ENCODE measurements at regions of chr3 and their contacts with region 1.

Region 1: GRCh38 chr3:50327943-50328691 is at the start of gene TUSC2:
- DNase-seq: peak; percentile 95

Region 2: GRCh38 chr3:50292159-50293078 is 35.7 kb before region 1 on chr3 and contains the start of gene IFRD2:
- CTCF ChIA-PET with region 1: no interaction called
- POLR2A ChIA-PET with region 1: interaction called, 21 read pairs
- DNase-seq: peak; percentile 93

Region 3: DNA sequence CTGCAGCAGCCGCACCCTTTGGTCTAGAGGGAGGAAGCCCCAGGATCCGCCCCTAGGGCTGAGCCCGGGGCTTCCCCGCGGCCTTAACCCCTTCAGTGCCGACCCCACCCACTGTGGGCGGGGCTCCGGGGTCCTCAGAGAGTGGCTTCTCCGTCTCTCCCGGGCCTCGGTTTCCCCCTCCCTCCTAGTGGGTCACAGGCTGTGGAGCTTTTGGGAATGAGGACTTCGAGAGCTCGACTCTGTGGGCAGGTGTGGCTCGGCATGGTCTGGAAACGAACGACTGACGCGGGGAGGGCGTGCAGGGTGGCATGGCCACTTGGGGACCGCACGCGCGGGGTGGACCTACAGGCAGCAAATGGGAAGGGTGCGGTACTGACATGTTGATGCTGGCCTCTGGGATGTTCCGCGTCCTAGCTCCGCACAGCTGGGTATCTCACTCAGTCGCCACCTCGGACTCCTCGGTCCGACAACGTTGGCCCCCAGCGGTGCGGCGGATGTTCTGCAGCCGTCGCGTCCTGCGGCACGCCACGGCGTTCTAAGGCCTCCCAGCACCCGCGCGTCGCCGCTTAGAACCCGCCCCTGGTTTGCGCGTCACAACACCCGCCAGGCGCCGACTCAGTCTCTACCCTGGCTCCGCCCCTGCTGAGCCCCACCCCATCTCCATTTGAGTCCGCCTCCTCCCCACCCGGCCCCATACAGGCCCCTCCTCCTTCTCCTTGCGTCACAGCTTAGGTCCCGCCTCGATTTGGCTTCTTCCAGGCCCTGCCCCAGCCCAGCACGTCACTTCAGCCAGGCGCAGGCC is 29.1 kb before region 1 on chr3 and contains the starts of genes HYAL3 and NAA80:
- CTCF ChIA-PET with region 1: interaction called, 3 read pairs
- POLR2A ChIA-PET with region 1: interaction called, 21 read pairs
- DNase-seq: peak; percentile 98

Region 4: DNA sequence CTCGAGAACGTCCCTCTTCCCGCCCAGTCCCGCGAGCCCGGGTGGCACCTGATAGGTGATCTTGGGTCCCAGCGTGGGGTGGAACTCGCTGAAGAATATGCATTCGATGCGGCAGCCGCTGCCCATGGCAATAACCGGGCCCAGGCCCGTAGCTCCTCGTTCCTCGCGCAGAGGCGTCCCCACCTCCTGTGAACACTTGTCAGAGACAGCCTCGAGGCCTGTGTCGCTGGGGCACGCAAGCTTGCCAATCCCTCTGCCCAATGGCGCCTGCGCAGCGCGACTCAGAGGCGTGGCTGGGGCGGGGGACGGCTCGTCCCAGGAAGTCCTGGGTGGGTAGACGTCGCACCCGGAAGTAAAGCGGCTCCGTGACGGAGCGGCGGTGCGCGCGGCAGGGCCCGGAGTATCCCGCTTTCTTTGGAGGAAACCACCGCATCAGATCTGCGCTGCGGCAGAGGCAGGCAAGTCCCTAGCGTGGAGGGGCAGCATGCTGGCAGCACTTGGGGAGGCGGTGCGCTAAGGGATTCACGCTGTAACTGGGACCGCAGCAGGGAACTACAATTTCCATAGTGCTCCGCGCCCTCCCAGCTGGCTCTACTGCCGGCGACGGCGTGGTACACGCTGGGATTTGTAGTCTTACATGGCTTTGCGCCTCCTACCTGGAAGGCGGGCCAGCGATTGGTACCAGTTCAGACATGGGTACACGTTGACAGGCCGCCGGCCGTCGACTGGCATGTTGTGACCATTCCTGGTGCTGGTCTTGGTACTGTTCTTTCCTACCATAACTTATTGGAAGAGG is 22.6 kb after region 1 on chr3 and contains the starts of genes CYB561D2 and NPRL2:
- CTCF ChIA-PET with region 1: no interaction called
- POLR2A ChIA-PET with region 1: interaction called, 14 read pairs
- DNase-seq: peak; percentile 96